K562 (cell line): ENCODE measurements at regions of chr7 and their contacts with region 1.

Region 1: DNA sequence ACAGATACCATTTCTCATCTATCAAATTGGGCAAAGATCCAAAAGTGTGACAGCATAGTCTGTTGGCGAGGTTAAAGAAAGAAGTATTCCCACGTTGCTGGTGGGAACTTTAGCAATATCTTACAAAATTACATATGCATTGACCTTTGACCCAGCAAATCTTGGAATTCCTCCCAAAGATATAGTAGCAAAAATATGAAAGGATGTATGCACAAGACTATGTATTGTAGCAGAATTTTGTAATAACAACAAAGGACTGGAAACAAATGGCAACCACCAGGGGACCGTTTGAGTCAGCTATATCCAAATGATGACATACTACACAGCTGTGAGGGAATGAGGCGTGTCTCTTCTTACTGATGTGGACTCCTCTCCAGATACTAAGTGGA is 50.2 kb downstream of the KCNH2 start:
- DNase-seq: peak; percentile 77 to 83 (median 80)
- ATAC-seq: peak; percentile 91
- H3K4me3 ChIP-seq: no peak overlapping the region
- H3K27ac ChIP-seq: no peak overlapping the region
- H3K4me1 ChIP-seq: peaks cover 12 to 36% of the 10 kb centered on the region in 2 experiments
- H3K27me3 ChIP-seq: no peaks in the 10 kb centered on the region
- CTCF ChIP-seq: peak; percentile 36 to 58 (median 52); a peak in 4 of 6 replicates
- EP300 ChIP-seq: no peak
- POLR2A ChIP-seq: no peak
- RAD21 ChIP-seq: peak in 1 of 2 experiments; percentile 49; a peak in 3 of 4 replicates

Region 2: GRCh38 chr7:150852371-150852920 is 75.5 kb before region 1 on chr7 and contains the start of gene AOC1:
- CTCF ChIA-PET with region 1: no interaction called
- POLR2A ChIA-PET with region 1: no interaction called
- in situ Hi-C with region 1: no loop called
- intact Hi-C with region 1: no loop called
- DNase-seq: no peak
- ATAC-seq: peak; percentile 20; the same call in 1 of the 3 replicates
- H3K4me3 ChIP-seq: no peak within 1 kb of the TSS
- H3K27ac ChIP-seq: no peak within 1 kb of the TSS
- H3K4me1 ChIP-seq: peaks cover 0 to 9% of the 10 kb centered on the region in 2 experiments; a peak in 1 of 5 replicates
- H3K27me3 ChIP-seq: peaks cover 80 to 86% of the 10 kb centered on the region in 2 experiments
- CTCF ChIP-seq: no peak
- EP300 ChIP-seq: no peak
- POLR2A ChIP-seq: no peak
- RAD21 ChIP-seq: no peak
- polyA plus RNA-seq, gene AOC1: not detected

Region 3: DNA sequence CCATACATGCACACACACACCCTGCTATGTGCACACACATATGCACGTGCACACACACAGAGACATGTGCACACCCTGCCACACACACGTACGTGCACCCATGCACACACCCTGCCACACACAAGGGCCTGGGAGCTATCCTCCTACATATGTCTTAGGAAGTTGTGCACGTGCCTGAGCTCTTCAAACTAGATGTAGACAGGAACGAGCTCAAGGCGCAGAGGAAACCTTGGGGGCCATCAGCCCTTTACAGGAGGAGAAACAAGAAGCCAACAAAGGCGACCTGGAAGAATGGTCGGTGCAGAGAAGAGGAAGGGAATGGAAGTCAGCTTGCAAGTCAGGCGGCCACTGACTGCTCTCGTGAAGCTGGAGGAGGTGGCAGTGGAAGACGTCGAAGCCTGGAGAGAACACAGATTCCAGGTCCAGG is 16.9 kb before region 1 on chr7:
- CTCF ChIA-PET with region 1: no interaction called
- POLR2A ChIA-PET with region 1: interaction called, 13 read pairs
- in situ Hi-C with region 1: no loop called
- intact Hi-C with region 1: no loop called
- DNase-seq: peak in 3 of 4 experiments; percentile 16 to 30 (median 30)
- ATAC-seq: peak; percentile 63
- H3K4me3 ChIP-seq: no peak overlapping the region
- H3K27ac ChIP-seq: no peak overlapping the region
- H3K4me1 ChIP-seq: peaks cover 0 to 5% of the 10 kb centered on the region in 2 experiments; a peak in 2 of 5 replicates
- H3K27me3 ChIP-seq: peaks cover 8 to 31% of the 10 kb centered on the region in 2 experiments
- CTCF ChIP-seq: no peak
- EP300 ChIP-seq: no peak
- POLR2A ChIP-seq: no peak
- RAD21 ChIP-seq: no peak

Region 4: GRCh38 chr7:150941981-150942590 is 14.1 kb after region 1 on chr7:
- CTCF ChIA-PET with region 1: no interaction called
- POLR2A ChIA-PET with region 1: interaction called, 20 read pairs
- in situ Hi-C with region 1: no loop called
- intact Hi-C with region 1: no loop called
- DNase-seq: peak in 2 of 4 experiments; percentile 63 to 68
- ATAC-seq: peak; percentile 18
- H3K4me3 ChIP-seq: no peak overlapping the region
- H3K27ac ChIP-seq: no peak overlapping the region
- H3K4me1 ChIP-seq: peaks cover 15 to 64% of the 10 kb centered on the region in 2 experiments; a peak in 4 of 5 replicates
- H3K27me3 ChIP-seq: no peaks in the 10 kb centered on the region
- CTCF ChIP-seq: no peak
- EP300 ChIP-seq: no peak
- POLR2A ChIP-seq: no peak
- RAD21 ChIP-seq: no peak

Region 5: DNA sequence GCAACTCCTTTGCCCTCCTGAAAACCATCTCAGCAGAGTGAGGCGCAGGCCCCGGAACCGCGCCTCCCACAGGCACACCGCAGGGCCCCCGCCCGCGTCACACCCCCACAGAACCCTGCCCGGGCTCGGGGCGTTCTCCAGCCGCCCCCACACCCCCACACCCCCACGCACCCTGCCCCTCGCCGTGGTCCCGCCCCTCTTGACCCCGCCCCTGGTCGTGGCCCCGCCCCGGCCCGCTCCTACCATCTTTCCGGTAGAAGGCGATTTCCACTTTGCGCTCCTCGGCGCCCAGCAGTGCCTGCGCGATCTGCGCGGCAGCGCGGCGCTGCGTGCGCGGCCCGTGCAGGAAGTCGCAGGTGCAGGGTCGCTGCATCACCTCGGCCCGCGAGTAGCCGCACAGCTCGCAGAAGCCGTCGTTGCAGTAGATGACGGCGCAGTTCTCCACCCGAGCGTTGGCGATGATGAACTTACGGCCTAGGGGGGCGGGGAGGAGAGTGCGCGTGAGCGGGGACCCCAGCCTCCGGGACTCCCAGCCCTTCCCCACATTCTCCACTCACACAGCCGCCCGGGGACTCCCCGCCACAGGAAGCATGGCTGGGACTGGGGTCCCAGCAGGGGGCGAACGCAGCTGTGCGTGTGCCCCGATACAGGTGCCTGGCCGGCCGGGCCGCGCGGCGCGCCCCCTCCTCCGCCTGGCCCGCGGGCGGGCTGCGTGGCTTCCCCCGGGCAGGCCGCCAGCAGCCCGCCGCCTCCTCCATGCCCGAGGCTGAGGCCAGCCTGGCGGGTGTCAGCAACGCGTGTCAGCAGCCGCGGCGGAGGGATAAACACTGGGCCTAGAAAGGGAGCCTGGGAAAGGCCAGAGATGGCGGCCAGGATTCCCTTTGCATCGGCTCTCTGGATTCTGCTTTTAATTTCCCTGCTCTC is 46.8 kb after region 1 on chr7:
- CTCF ChIA-PET with region 1: no interaction called
- POLR2A ChIA-PET with region 1: no interaction called
- in situ Hi-C with region 1: no loop called
- intact Hi-C with region 1: no loop called
- DNase-seq: peak; percentile 89 to 98 (median 96)
- ATAC-seq: peak; percentile 72
- H3K4me3 ChIP-seq: peak overlapping the region; percentile 54
- H3K27ac ChIP-seq: peak overlapping the region; percentile 60
- H3K4me1 ChIP-seq: peaks cover 50 to 86% of the 10 kb centered on the region in 2 experiments
- H3K27me3 ChIP-seq: peaks cover 0 to 1% of the 10 kb centered on the region in 2 experiments; a peak in 2 of 5 replicates
- CTCF ChIP-seq: peak; percentile 55 to 65 (median 61)
- EP300 ChIP-seq: no peak
- POLR2A ChIP-seq: peak; percentile 75
- RAD21 ChIP-seq: peak; percentile 32 to 42; a peak in 2 of 4 replicates

Region 6: DNA sequence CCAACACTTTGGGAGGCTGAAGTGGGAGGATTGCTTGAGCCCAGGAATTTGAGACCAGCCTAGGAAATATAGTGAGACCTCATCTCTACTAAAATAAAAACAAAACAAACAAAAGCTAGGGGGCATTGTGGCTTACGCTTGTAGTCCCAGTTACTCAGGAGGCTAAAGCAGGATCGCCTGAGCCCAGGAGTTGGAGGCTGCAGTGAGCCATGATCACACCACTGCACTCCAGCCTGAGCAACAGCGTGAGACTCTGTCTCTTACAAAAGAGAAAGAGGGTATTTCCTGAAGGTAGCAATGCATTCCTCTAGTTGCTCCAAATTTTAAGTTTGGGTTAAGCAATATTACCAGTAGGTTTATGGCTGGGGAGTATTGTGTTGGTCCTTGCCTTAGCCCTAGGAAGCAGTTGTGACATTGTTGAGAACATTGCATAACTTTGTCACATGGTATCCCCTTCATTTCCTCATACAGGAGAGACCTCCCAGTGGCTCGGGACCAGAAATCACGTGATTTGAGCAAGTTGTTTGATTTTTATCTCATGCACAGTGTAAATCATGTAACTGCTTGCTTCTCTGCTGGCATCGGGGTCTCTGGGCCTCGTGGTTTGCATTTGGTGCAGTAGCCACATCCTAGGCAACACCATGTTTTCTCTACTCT is 343.9 kb after region 1 on chr7:
- CTCF ChIA-PET with region 1: no interaction called
- POLR2A ChIA-PET with region 1: no interaction called
- in situ Hi-C with region 1: no loop called
- intact Hi-C with region 1: no loop called
- DNase-seq: no peak
- ATAC-seq: peak; percentile 54
- H3K4me3 ChIP-seq: no peak overlapping the region
- H3K27ac ChIP-seq: no peak overlapping the region
- H3K4me1 ChIP-seq: peaks cover 16 to 34% of the 10 kb centered on the region in 2 experiments; a peak in 4 of 5 replicates
- H3K27me3 ChIP-seq: peaks cover 20 to 89% of the 10 kb centered on the region in 2 experiments; a peak in 4 of 5 replicates
- CTCF ChIP-seq: peak; percentile 20 to 42 (median 30); a peak in 2 of 6 replicates
- EP300 ChIP-seq: peak; percentile 6; the same call in 1 of the 2 replicates
- POLR2A ChIP-seq: no peak
- RAD21 ChIP-seq: peak in 1 of 2 experiments; percentile 12; a peak in 1 of 4 replicates